ENCODE measurements at regions of chr10 and their contacts with region 1.

Region 1: GRCh38 chr10:93702211-93703001 is at the start of gene FRA10AC1:
- DNase-seq: peak; percentile 92 to 96 (median 93)
- H3K4me3 ChIP-seq: peak within 1 kb of the TSS; percentile 67 to 98 (median 82)
- H3K4me3 Mint-ChIP-seq: no peak within 1 kb of the TSS
- H3K27ac ChIP-seq: peak within 1 kb of the TSS; percentile 73 to 84
- H3K27ac Mint-ChIP-seq: no peak within 1 kb of the TSS
- H3K4me1 ChIP-seq: peaks cover 14 to 17% of the 10 kb centered on the region in 2 donors
- H3K4me1 Mint-ChIP-seq: peaks cover 4% of the 10 kb centered on the region
- H3K27me3 ChIP-seq: no peaks in the 10 kb centered on the region
- H3K27me3 Mint-ChIP-seq: peaks cover 5 to 10% (median 5%) of the 10 kb centered on the region in 3 donors
- CTCF ChIP-seq: peak; percentile 68
- polyA plus RNA-seq, gene FRA10AC1: 0.95 to 7.2 (median 2.0) TPM

Region 2: DNA sequence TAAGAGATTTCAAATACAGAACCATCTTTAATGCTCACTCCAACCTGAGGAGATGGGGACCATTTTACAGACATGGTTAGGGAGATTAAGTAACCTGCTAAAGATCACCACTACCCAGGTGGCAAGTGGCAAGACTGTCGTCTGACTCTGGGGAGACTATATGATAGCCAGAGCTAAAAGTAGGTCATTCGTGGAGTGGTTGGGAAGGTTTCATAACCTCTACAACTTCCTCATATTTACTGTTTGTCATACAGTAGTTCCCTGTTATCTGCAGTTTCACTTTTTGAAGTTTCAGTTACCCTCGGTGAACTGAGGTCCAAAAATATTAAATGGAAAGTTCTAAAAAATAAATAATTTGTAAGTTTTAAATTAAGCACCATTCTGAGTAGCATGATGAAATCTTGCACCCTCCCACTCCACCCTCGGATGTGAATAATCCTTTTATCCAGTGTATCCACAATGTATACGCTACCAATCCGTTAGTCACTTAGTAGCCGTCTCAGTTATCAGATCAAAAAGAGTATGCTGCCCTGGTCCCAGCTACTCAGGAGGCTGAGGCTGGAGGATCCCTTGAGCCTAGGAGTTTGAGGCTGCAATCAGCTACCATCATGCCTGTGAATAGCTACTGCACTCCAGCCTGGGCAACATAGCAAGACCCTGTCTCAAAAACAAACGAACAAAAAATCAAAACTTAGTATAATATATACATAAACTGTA is 40.4 kb after region 1 on chr10:
- intact Hi-C with region 1: loop called in 1 of 2 experiments (anchors 5 kb)
- DNase-seq: peak; percentile 70 to 94 (median 82)
- H3K4me3 ChIP-seq: peak overlapping the region; percentile 20 to 78 (median 74)
- H3K4me3 Mint-ChIP-seq: peak overlapping the region in 1 of 2 donors; percentile 55
- H3K27ac ChIP-seq: peak overlapping the region; percentile 69 to 82
- H3K27ac Mint-ChIP-seq: peak overlapping the region; percentile 78 to 94 (median 87)
- H3K4me1 ChIP-seq: peaks cover 65 to 67% of the 10 kb centered on the region in 2 donors
- H3K4me1 Mint-ChIP-seq: peaks cover 54% of the 10 kb centered on the region
- H3K27me3 ChIP-seq: no peaks in the 10 kb centered on the region
- H3K27me3 Mint-ChIP-seq: peaks cover 3 to 7% (median 5%) of the 10 kb centered on the region in 3 donors
- CTCF ChIP-seq: no peak

Region 3: DNA sequence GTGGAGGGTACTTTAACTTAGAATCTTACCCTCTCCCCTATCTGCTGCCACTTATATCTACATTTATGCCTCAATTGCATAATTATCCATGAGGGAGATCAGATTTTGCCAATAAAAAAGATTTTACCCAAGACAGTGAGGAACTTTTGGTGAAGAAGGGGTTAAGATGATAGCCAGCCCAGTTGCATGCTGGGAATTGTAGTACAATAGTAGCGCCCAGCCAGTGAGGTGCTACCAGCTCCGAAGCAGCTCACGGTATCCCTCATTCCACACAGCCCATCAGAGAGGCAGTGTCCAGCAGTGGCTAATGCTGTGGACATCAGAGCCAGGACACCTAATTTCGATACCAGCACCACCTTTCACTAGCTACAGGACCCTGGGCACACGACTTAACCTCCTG is 49.4 kb after region 1 on chr10:
- intact Hi-C with region 1: loop called in 1 of 2 experiments (anchors 5 kb)
- DNase-seq: peak in 2 of 3 donors; percentile 11 to 36
- H3K4me3 ChIP-seq: peak overlapping the region in 2 of 3 experiments; percentile 37 to 66
- H3K4me3 Mint-ChIP-seq: peak overlapping the region; percentile 51 to 85
- H3K27ac ChIP-seq: no peak overlapping the region
- H3K27ac Mint-ChIP-seq: no peak overlapping the region
- H3K4me1 ChIP-seq: peaks cover 5 to 14% of the 10 kb centered on the region in 2 donors
- H3K4me1 Mint-ChIP-seq: peaks cover 14% of the 10 kb centered on the region
- H3K27me3 ChIP-seq: peaks cover 8 to 22% of the 10 kb centered on the region in 2 donors
- H3K27me3 Mint-ChIP-seq: peaks cover 9 to 17% (median 10%) of the 10 kb centered on the region in 3 donors
- CTCF ChIP-seq: no peak

Region 4: DNA sequence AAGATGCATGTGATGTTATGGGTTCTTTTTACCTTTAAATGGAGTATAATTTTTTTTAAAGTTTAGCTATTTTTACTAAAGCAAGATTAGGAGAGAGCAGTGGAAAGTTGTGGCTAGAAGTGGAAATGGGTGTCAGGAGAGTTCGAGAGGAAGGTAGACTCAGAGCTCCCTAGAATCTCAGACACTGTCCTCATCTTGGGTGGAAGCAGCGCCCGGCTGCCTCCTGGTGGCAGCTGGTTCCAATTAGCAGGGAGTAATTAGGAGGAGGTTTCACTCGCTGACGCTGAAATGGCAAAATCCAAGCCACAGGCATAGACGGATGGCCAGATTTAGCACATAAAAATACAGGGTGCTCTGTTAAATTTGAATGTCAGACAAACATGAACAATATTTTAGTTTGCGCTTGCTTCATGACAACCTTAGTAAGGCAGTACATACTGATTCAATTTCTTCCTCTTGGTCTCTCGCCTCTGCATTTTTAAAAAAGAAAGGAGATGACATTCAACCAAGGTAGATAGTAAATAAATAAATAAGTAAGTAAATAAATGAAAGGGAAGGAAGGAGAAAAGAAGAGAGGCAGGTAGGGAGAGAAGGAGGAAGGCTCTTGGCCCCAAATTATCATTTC is 113.8 kb after region 1 on chr10:
- intact Hi-C with region 1: loop called (anchors 5 kb)
- DNase-seq: peak; percentile 29 to 43 (median 42)
- H3K4me3 ChIP-seq: no peak overlapping the region
- H3K4me3 Mint-ChIP-seq: peak overlapping the region in 1 of 2 donors; percentile 8
- H3K27ac ChIP-seq: no peak overlapping the region
- H3K27ac Mint-ChIP-seq: no peak overlapping the region
- H3K4me1 ChIP-seq: no peaks in the 10 kb centered on the region
- H3K4me1 Mint-ChIP-seq: peaks cover 9% of the 10 kb centered on the region
- H3K27me3 ChIP-seq: peaks cover 2 to 4% of the 10 kb centered on the region in 2 donors
- H3K27me3 Mint-ChIP-seq: peaks cover 10 to 18% (median 16%) of the 10 kb centered on the region in 3 donors
- CTCF ChIP-seq: peak; percentile 76

Region 5: GRCh38 chr10:94320285-94320914 is 618.0 kb after region 1 on chr10:
- intact Hi-C with region 1: loop called in 1 of 2 experiments (anchors 5 kb)
- DNase-seq: peak; percentile 21 to 48 (median 46)
- H3K4me3 ChIP-seq: no peak overlapping the region
- H3K4me3 Mint-ChIP-seq: no peak overlapping the region
- H3K27ac ChIP-seq: no peak overlapping the region
- H3K27ac Mint-ChIP-seq: no peak overlapping the region
- H3K4me1 ChIP-seq: no peaks in the 10 kb centered on the region
- H3K4me1 Mint-ChIP-seq: no peaks in the 10 kb centered on the region
- H3K27me3 ChIP-seq: no peaks in the 10 kb centered on the region
- H3K27me3 Mint-ChIP-seq: no peaks in the 10 kb centered on the region
- CTCF ChIP-seq: peak; percentile 96